ENCODE measurements at regions of chr5 and their contacts with region 1.

Region 1: GRCh38 chr5:76801159-76801802 is 17.5 kb upstream of the F2RL1 start:
- DNase-seq: no peak
- H3K4me3 ChIP-seq: no peak overlapping the region
- H3K27ac ChIP-seq: no peak overlapping the region
- H3K4me1 ChIP-seq: peaks cover 7% of the 10 kb centered on the region
- H3K27me3 ChIP-seq: no peaks in the 10 kb centered on the region
- CTCF ChIP-seq: no peak

Region 2: GRCh38 chr5:76790632-76791290 is 10.5 kb before region 1 on chr5:
- CTCF ChIA-PET with region 1: no interaction called
- POLR2A ChIA-PET with region 1: interaction called, 19 read pairs
- intact Hi-C with region 1: no loop called
- DNase-seq: peak; percentile 86
- H3K4me3 ChIP-seq: no peak overlapping the region
- H3K27ac ChIP-seq: peak overlapping the region; percentile 26
- H3K4me1 ChIP-seq: peaks cover 6% of the 10 kb centered on the region
- H3K27me3 ChIP-seq: no peaks in the 10 kb centered on the region
- CTCF ChIP-seq: no peak

Region 3: DNA sequence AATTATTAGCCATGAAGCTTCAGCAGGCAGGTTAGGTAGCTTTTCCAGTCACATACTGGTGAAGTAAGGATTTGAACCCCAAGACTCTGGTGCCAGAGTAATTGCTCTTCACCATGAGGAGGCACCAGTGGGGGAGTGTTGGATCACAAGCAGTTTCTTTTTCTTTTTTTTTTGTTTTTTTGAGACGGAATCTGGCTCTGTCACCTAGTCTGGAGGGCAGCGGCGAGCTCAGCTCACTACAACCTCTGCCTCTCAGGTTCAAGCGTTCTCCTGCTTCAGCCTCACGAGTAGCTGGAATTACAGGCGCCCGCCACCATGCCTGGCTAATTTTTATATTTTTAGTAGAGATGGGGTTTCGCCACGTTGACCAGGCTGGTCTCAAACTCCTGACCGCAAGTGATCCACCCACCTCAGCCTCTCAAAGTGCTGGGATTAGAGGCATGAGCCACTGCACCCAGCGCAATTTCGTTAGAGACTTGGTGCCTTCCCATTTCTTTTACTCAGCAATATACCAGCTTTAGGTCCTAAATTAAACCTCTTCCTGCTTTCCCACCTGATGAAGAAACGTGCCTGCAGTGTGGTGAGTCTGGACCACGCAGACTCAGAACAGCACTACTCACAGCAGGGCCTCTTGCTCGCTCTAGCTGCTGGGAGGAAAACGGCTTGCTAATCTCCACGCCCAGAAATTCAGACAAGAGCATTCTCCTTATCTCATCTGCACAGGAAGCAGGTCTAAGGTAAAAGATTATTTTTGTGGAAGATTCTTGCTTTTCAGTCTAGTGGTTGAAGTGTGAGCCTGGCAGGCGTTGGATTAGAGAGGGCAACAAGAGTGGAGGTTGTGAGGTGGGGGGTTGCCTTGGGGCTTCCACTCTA is 48.4 kb after region 1 on chr5 and contains the start of gene S100Z:
- CTCF ChIA-PET with region 1: no interaction called
- POLR2A ChIA-PET with region 1: no interaction called
- intact Hi-C with region 1: no loop called
- DNase-seq: no peak
- H3K4me3 ChIP-seq: no peak within 1 kb of the TSS
- H3K27ac ChIP-seq: no peak within 1 kb of the TSS
- H3K4me1 ChIP-seq: no peaks in the 10 kb centered on the region
- H3K27me3 ChIP-seq: no peaks in the 10 kb centered on the region
- CTCF ChIP-seq: no peak
- total RNA-seq, gene S100Z: not detected in 2 replicates

Region 4: DNA sequence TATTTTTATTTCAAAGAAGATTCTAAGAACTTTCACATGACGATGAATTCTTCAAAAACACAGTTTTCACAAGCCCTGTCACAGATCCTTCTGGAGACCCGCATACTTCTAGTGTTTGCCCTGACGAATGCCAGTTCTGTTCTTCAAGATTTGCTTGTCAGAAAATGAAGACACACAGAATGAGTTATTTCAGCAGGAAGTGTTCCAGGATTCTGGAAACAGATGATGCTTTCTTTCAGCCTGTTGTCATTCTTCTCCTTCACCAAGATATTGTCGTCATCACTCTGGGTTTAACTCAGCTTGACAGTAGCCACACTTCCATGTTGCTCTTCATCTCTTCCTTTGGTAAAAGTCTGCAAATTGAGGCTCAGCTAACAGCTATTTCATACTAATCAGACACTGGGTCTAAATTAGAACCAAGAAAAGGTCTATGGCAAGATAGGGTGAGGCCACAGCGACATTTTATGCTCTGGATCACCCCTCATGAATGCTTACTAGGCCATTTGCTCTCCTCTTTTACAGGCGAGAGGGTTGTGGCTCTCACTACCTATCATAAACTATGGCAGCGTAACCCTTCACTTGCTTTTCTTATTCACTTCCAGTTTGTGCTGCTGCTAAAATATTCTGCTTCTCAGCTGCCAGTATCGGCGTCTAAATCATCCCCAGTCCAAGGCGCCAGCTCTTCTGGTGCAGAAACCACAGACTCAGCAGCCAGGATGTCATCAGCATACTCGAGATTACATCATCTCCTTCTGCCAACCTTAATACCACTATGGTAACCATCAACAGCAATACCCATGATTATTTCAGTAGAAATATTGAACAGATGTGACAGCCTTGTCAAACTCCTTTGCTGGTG is 1134.5 kb after region 1 on chr5:
- CTCF ChIA-PET with region 1: no interaction called
- POLR2A ChIA-PET with region 1: no interaction called
- intact Hi-C with region 1: no loop called
- DNase-seq: peak; percentile 19
- H3K4me3 ChIP-seq: no peak overlapping the region
- H3K27ac ChIP-seq: no peak overlapping the region
- H3K4me1 ChIP-seq: no peaks in the 10 kb centered on the region
- H3K27me3 ChIP-seq: peaks cover 89% of the 10 kb centered on the region
- CTCF ChIP-seq: no peak